ENCODE measurements at regions of chr12 and their contacts with region 1.

Region 1: GRCh38 chr12:95700316-95700785 is 90.2 kb downstream of the NTN4 start:
- DNase-seq: peak; percentile 13 to 85
- H3K4me3 ChIP-seq: peak overlapping the region in 1 of 2 donors; percentile 26
- H3K27ac ChIP-seq: peak overlapping the region; percentile 70 to 77
- H3K4me1 ChIP-seq: peaks cover 7 to 19% of the 10 kb centered on the region in 2 donors
- H3K27me3 ChIP-seq: no peaks in the 10 kb centered on the region
- CTCF ChIP-seq: no peak

Region 2: GRCh38 chr12:95608252-95609033 is 91.9 kb before region 1 on chr12:
- intact Hi-C with region 1: loop called (anchors 2 kb)
- DNase-seq: peak; percentile 73 to 96
- H3K4me3 ChIP-seq: peak overlapping the region in 1 of 2 donors; percentile 10
- H3K27ac ChIP-seq: peak overlapping the region; percentile 81 to 89
- H3K4me1 ChIP-seq: peaks cover 0 to 7% of the 10 kb centered on the region in 2 donors
- H3K27me3 ChIP-seq: no peaks in the 10 kb centered on the region
- CTCF ChIP-seq: no peak

Measured in ascending aorta (tissue), 2 donors.